Prostate gland (tissue), 2 donors: ENCODE measurements at regions of chr1 and their contacts with region 1.

Region 1: GRCh38 chr1:94599095-94599813 is 57.7 kb upstream of the F3 start:
- DNase-seq: peak; percentile 29
- H3K4me3 ChIP-seq: no peak overlapping the region
- H3K27ac ChIP-seq: no peak overlapping the region
- H3K4me1 ChIP-seq: peaks cover 2% of the 10 kb centered on the region
- H3K27me3 ChIP-seq: no peaks in the 10 kb centered on the region
- CTCF ChIP-seq: peak; percentile 20 to 83 (median 51)
- POLR2A ChIP-seq: no peak

Region 2: GRCh38 chr1:94481473-94481933 is 117.8 kb before region 1 on chr1:
- intact Hi-C with region 1: no loop called
- DNase-seq: peak; percentile 46
- H3K4me3 ChIP-seq: no peak overlapping the region
- H3K27ac ChIP-seq: no peak overlapping the region
- H3K4me1 ChIP-seq: no peaks in the 10 kb centered on the region
- H3K27me3 ChIP-seq: no peaks in the 10 kb centered on the region
- CTCF ChIP-seq: peak; percentile 48 to 75 (median 67)
- POLR2A ChIP-seq: no peak

Region 3: DNA sequence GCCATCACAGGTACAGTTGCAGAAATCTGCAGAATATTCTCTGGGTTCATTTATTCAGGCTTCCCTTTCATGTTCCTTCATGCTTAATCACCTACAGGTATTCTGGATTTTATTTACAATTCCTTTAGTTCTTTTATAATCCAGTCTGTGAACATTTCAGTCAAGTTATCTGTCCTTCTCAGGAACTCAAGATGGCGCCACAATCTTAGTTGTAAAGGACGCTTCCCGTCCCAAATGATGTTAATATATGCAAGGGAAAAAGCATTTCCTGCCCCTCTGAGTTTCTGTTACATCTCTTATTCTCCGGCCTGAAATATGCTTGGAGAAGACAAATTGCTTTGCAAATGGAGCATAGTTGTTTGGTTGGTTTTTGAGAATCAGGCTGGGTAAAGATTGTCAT is 77.0 kb before region 1 on chr1:
- intact Hi-C with region 1: loop called (anchors 2 kb)
- DNase-seq: peak; percentile 42
- H3K4me3 ChIP-seq: no peak overlapping the region
- H3K27ac ChIP-seq: no peak overlapping the region
- H3K4me1 ChIP-seq: no peaks in the 10 kb centered on the region
- H3K27me3 ChIP-seq: no peaks in the 10 kb centered on the region
- CTCF ChIP-seq: peak in 3 of 4 experiments; percentile 48 to 66 (median 57)
- POLR2A ChIP-seq: no peak

Region 4: GRCh38 chr1:94541175-94542087 is 57.8 kb before region 1 on chr1 and contains the start of gene F3:
- intact Hi-C with region 1: loop called (anchors 5 kb)
- DNase-seq: peak; percentile 94
- H3K4me3 ChIP-seq: peak within 1 kb of the TSS; percentile 75 to 90
- H3K27ac ChIP-seq: peak within 1 kb of the TSS; percentile 90 to 94
- H3K4me1 ChIP-seq: no peaks in the 10 kb centered on the region
- H3K27me3 ChIP-seq: no peaks in the 10 kb centered on the region
- CTCF ChIP-seq: peak in 2 of 4 experiments; percentile 12 to 13
- POLR2A ChIP-seq: peak; percentile 92
- total RNA-seq, gene F3: 36.3 to 120 TPM

Region 5: DNA sequence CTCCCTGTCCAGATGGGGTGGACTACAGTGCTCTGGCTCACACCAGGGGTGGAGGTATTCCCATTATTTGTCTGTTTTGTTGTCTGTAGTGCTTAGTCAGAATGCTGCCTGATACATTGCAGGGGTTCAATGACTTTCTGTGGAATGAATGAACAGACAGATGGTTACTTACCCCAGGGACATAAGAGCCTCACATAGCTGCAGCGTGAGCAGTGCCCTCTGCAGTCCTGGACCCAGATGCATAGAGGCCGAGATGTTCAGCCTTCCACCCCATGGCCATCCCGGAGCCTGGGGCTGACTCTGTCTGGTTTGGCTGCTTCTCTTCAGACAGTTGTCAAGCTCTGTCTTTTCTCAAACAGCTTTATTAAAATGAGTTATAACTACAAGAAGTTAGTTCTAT is 44.6 kb before region 1 on chr1:
- intact Hi-C with region 1: loop called (anchors 5 kb)
- DNase-seq: no peak
- H3K4me3 ChIP-seq: no peak overlapping the region
- H3K27ac ChIP-seq: peak overlapping the region; percentile 27 to 67
- H3K4me1 ChIP-seq: no peaks in the 10 kb centered on the region
- H3K27me3 ChIP-seq: no peaks in the 10 kb centered on the region
- CTCF ChIP-seq: no peak
- POLR2A ChIP-seq: no peak